ENCODE measurements at regions of chr10 and their contacts with region 1.

Region 1: GRCh38 chr10:12455774-12456173 is 106.4 kb downstream of the CAMK1D start:
- DNase-seq: no peak
- H3K4me3 ChIP-seq: no peak overlapping the region
- H3K27ac ChIP-seq: no peak overlapping the region
- H3K4me1 ChIP-seq: no peaks in the 10 kb centered on the region
- H3K27me3 ChIP-seq: no peaks in the 10 kb centered on the region
- CTCF ChIP-seq: no peak

Region 2: DNA sequence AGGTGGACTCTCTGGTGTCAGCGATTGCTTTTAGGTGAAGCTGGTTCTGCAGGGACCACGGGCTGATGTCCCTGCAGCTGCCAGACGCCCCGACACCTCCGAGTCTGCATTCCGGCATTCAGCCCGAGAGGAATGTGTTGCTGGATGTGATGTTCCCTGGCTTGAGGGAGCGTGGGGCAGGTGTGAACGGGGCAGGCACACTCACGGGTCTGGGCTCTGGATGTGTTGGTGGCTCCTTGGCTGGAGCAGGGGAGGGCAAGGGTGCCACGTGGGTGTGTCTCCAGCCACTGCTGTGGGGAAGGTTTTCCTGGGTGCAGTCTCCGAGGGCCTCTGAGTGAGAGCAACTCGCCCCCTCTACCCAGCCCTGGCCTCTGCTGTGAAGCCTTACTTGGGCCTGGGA is 34.0 kb after region 1 on chr10:
- CTCF ChIA-PET with region 1: no interaction called
- dilution Hi-C with region 1: loop called (anchors 5 kb)
- in situ Hi-C with region 1: no loop called
- intact Hi-C with region 1: no loop called
- DNase-seq: no peak
- H3K4me3 ChIP-seq: no peak overlapping the region
- H3K27ac ChIP-seq: no peak overlapping the region
- H3K4me1 ChIP-seq: no peaks in the 10 kb centered on the region
- H3K27me3 ChIP-seq: no peaks in the 10 kb centered on the region
- CTCF ChIP-seq: no peak

Measured in mammary epithelial cell (primary cell).